Dendritic cell treated with granulocyte-macrophage colony-stimulating factor and Interleukin-4, amounts not matched to agents 40 ng/mL and 50 ng/mL, for 4 days (primary cell): ENCODE measurements at regions of chr13 and their contacts with region 1.

Region 1: GRCh38 chr13:77176350-77176749 is 149.4 kb upstream of the FBXL3 start:
- H3K4me3 Mint-ChIP-seq: no peak overlapping the region
- H3K27ac Mint-ChIP-seq: no peak overlapping the region
- H3K4me1 Mint-ChIP-seq: no peaks in the 10 kb centered on the region
- H3K27me3 Mint-ChIP-seq: no peaks in the 10 kb centered on the region

Region 2: DNA sequence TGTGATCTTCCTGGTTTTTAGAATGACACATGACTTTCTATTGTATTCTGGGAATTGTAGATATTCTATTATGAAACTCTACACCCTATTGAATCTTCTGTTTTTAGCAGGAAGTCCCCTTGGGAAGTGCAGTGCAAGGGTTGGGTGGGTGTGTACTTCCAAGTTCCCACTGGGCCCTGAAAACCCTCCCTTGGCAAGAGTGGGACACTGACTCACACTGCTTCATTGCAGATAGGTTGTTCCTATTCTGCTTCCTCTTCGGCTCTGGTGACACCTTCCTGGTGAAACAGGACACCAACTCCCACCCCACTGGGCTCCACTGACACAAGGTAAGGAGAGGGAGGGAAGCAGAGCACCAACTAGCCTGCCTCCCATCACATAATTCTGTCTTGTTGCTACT is 411.9 kb before region 1 on chr13:
- intact Hi-C with region 1: no loop called
- H3K4me3 Mint-ChIP-seq: no peak overlapping the region
- H3K27ac Mint-ChIP-seq: peak overlapping the region; percentile 86
- H3K4me1 Mint-ChIP-seq: peaks cover 42% of the 10 kb centered on the region
- H3K27me3 Mint-ChIP-seq: no peaks in the 10 kb centered on the region

Region 3: GRCh38 chr13:77002590-77003190 is 173.7 kb before region 1 on chr13:
- intact Hi-C with region 1: loop called (anchors 5 kb)
- H3K4me3 Mint-ChIP-seq: no peak overlapping the region
- H3K27ac Mint-ChIP-seq: no peak overlapping the region
- H3K4me1 Mint-ChIP-seq: peaks cover 6% of the 10 kb centered on the region
- H3K27me3 Mint-ChIP-seq: no peaks in the 10 kb centered on the region

Region 4: GRCh38 chr13:77079902-77080413 is 96.4 kb before region 1 on chr13:
- intact Hi-C with region 1: loop called (anchors 10 kb)
- H3K4me3 Mint-ChIP-seq: no peak overlapping the region
- H3K27ac Mint-ChIP-seq: no peak overlapping the region
- H3K4me1 Mint-ChIP-seq: no peaks in the 10 kb centered on the region
- H3K27me3 Mint-ChIP-seq: no peaks in the 10 kb centered on the region